CD8-positive, alpha-beta T cell (primary cell): ENCODE measurements at regions of chr7 and their contacts with region 1.

Region 1: DNA sequence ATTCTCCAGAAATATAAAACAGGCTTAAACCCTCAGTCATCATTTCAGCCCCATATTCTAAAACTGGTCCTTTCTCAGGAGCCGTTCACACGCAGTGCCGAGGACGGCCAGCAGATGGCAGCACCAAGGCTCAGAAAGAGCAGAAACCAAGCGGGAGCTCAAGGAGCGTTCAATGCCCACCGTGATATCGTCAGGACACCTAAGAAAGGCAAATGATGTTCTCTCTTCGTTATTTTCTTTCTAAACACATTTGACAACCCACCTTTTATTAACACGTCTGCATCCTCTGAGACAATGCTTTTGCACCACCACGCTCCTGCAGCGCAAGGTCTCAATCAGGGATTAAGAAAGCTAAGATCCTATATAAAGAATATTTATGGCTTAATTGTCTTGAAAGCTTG is 45.7 kb upstream of the RBM33 start:
- DNase-seq: peak; percentile 67 to 90 (median 79)
- ATAC-seq: peak; percentile 88
- H3K4me3 ChIP-seq: no peak overlapping the region
- H3K4me3 Mint-ChIP-seq: no peak overlapping the region
- H3K27ac ChIP-seq: no peak overlapping the region
- H3K27ac Mint-ChIP-seq: no peak overlapping the region
- H3K4me1 ChIP-seq: no peaks in the 10 kb centered on the region
- H3K4me1 Mint-ChIP-seq: peaks cover 3% of the 10 kb centered on the region
- H3K27me3 ChIP-seq: peaks cover 0 to 2% of the 10 kb centered on the region in 2 experiments
- H3K27me3 Mint-ChIP-seq: peaks cover 15% of the 10 kb centered on the region
- CTCF ChIP-seq: peak; percentile 96

Region 2: DNA sequence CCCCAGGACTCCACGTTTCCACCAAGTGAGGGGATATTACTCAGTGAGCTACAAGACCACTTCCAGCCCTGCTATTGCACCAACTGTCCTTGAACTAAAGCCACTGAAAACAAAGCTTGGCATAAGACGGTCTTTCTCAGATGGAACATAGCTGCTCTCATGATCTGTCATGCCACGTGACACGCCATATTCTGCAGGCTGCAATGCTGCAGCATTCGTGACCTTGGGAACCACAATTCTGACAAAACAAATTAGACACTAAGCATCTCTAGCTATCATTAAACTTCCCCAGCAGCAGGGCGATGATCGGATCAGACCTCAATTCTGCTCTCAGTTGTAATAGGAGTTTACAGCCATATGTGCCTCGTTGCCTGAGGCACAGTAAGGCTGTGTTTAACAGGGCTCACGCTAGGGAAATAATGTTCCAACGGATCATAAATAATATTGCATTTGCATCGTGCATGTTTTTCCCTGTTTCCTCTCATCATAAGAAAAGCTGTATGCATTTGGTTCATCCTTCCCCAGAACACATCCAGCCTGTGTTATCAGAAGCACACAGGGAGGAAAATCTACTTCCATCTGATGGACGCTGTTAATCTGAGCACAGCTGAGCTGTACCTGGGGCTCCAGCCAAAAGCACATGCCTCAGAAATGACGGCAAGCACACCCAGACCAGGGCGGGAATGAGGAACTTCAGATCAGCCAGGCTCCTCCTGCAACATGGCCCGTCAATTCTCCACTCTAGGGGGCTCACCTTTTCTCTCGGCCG is 13.9 kb before region 1 on chr7:
- CTCF ChIA-PET with region 1: interaction called, 17 read pairs
- POLR2A ChIA-PET with region 1: no interaction called
- intact Hi-C with region 1: no loop called
- DNase-seq: no peak
- ATAC-seq: no peak
- H3K4me3 ChIP-seq: no peak overlapping the region
- H3K4me3 Mint-ChIP-seq: no peak overlapping the region
- H3K27ac ChIP-seq: no peak overlapping the region
- H3K27ac Mint-ChIP-seq: no peak overlapping the region
- H3K4me1 ChIP-seq: no peaks in the 10 kb centered on the region
- H3K4me1 Mint-ChIP-seq: no peaks in the 10 kb centered on the region
- H3K27me3 ChIP-seq: peaks cover 0 to 2% of the 10 kb centered on the region in 2 experiments
- H3K27me3 Mint-ChIP-seq: peaks cover 32% of the 10 kb centered on the region
- CTCF ChIP-seq: no peak

Region 3: GRCh38 chr7:155610633-155611193 is 11.9 kb after region 1 on chr7:
- CTCF ChIA-PET with region 1: interaction called, 26 read pairs
- POLR2A ChIA-PET with region 1: no interaction called
- intact Hi-C with region 1: no loop called
- DNase-seq: no peak
- ATAC-seq: no peak
- H3K4me3 ChIP-seq: no peak overlapping the region
- H3K4me3 Mint-ChIP-seq: no peak overlapping the region
- H3K27ac ChIP-seq: no peak overlapping the region
- H3K27ac Mint-ChIP-seq: no peak overlapping the region
- H3K4me1 ChIP-seq: no peaks in the 10 kb centered on the region
- H3K4me1 Mint-ChIP-seq: no peaks in the 10 kb centered on the region
- H3K27me3 ChIP-seq: no peaks in the 10 kb centered on the region
- H3K27me3 Mint-ChIP-seq: peaks cover 9% of the 10 kb centered on the region
- CTCF ChIP-seq: no peak

Region 4: DNA sequence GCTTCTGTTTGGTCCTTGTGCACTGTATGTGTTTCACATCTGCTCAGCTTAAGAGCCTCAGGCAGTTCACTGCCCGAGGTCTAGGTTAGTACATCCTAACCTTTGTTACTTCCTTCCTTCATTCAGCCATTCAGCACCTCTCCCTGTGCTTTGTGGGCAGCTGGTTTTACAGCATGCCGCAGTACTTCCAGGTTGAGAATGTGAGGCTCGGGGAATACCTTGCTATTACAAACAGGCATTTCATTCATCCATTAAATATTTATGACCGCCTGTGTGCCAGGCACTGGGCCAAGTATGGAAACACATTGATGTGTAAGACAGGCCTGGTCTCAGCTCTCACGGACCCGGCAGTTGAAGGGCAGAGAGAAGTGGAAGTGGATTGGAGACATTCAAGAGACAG is 131.0 kb after region 1 on chr7:
- CTCF ChIA-PET with region 1: interaction called, 19 read pairs
- POLR2A ChIA-PET with region 1: no interaction called
- intact Hi-C with region 1: no loop called
- DNase-seq: no peak
- ATAC-seq: no peak
- H3K4me3 ChIP-seq: no peak overlapping the region
- H3K4me3 Mint-ChIP-seq: no peak overlapping the region
- H3K27ac ChIP-seq: no peak overlapping the region
- H3K27ac Mint-ChIP-seq: peak overlapping the region; percentile 2
- H3K4me1 ChIP-seq: peaks cover 18% of the 10 kb centered on the region
- H3K4me1 Mint-ChIP-seq: peaks cover 55% of the 10 kb centered on the region
- H3K27me3 ChIP-seq: no peaks in the 10 kb centered on the region
- H3K27me3 Mint-ChIP-seq: no peaks in the 10 kb centered on the region
- CTCF ChIP-seq: no peak

Region 5: GRCh38 chr7:155738652-155739537 is 140.1 kb after region 1 on chr7:
- CTCF ChIA-PET with region 1: interaction called, 22 read pairs
- POLR2A ChIA-PET with region 1: interaction called, 3 read pairs
- intact Hi-C with region 1: loop called (anchors 1 kb)
- DNase-seq: peak; percentile 41 to 81 (median 67)
- ATAC-seq: peak; percentile 86
- H3K4me3 ChIP-seq: no peak overlapping the region
- H3K4me3 Mint-ChIP-seq: peak overlapping the region; percentile 1
- H3K27ac ChIP-seq: peak overlapping the region in 1 of 2 experiments; percentile 29
- H3K27ac Mint-ChIP-seq: peak overlapping the region; percentile 55
- H3K4me1 ChIP-seq: peaks cover 30% of the 10 kb centered on the region
- H3K4me1 Mint-ChIP-seq: peaks cover 43% of the 10 kb centered on the region
- H3K27me3 ChIP-seq: no peaks in the 10 kb centered on the region
- H3K27me3 Mint-ChIP-seq: no peaks in the 10 kb centered on the region
- CTCF ChIP-seq: peak; percentile 64

Region 6: GRCh38 chr7:155763691-155764437 is 165.1 kb after region 1 on chr7:
- CTCF ChIA-PET with region 1: interaction called, 147 read pairs
- POLR2A ChIA-PET with region 1: no interaction called
- intact Hi-C with region 1: loop called (anchors 1 kb)
- DNase-seq: peak in 8 of 9 experiments; percentile 23 to 80 (median 60)
- ATAC-seq: peak; percentile 80
- H3K4me3 ChIP-seq: peak overlapping the region in 1 of 2 experiments; percentile 28
- H3K4me3 Mint-ChIP-seq: peak overlapping the region; percentile 78
- H3K27ac ChIP-seq: peak overlapping the region; percentile 26 to 86
- H3K27ac Mint-ChIP-seq: peak overlapping the region; percentile 91
- H3K4me1 ChIP-seq: peaks cover 31% of the 10 kb centered on the region
- H3K4me1 Mint-ChIP-seq: peaks cover 54% of the 10 kb centered on the region
- H3K27me3 ChIP-seq: no peaks in the 10 kb centered on the region
- H3K27me3 Mint-ChIP-seq: no peaks in the 10 kb centered on the region
- CTCF ChIP-seq: no peak

Region 7: GRCh38 chr7:155769701-155770100 is 170.9 kb after region 1 on chr7:
- CTCF ChIA-PET with region 1: interaction called, 147 read pairs
- POLR2A ChIA-PET with region 1: no interaction called
- intact Hi-C with region 1: loop called (anchors 1 kb)
- DNase-seq: no peak
- ATAC-seq: no peak
- H3K4me3 ChIP-seq: no peak overlapping the region
- H3K4me3 Mint-ChIP-seq: no peak overlapping the region
- H3K27ac ChIP-seq: no peak overlapping the region
- H3K27ac Mint-ChIP-seq: no peak overlapping the region
- H3K4me1 ChIP-seq: peaks cover 5% of the 10 kb centered on the region
- H3K4me1 Mint-ChIP-seq: peaks cover 7% of the 10 kb centered on the region
- H3K27me3 ChIP-seq: no peaks in the 10 kb centered on the region
- H3K27me3 Mint-ChIP-seq: no peaks in the 10 kb centered on the region
- CTCF ChIP-seq: no peak